ENCODE measurements at regions of chr17 and their contacts with region 1.

Region 1: GRCh38 chr17:60188759-60189158 is 39.0 kb downstream of the CA4 start:
- DNase-seq: no peak
- ATAC-seq: no peak
- H3K4me3 ChIP-seq: no peak overlapping the region
- H3K27ac ChIP-seq: no peak overlapping the region
- H3K4me1 ChIP-seq: no peaks in the 10 kb centered on the region
- H3K27me3 ChIP-seq: no peaks in the 10 kb centered on the region
- CTCF ChIP-seq: no peak
- POLR2A ChIP-seq: no peak

Region 2: GRCh38 chr17:59668816-59669215 is 519.9 kb before region 1 on chr17:
- in situ Hi-C with region 1: loop called in 1 of 4 experiments (anchors 25 kb)
- intact Hi-C with region 1: no loop called
- DNase-seq: no peak
- ATAC-seq: no peak
- H3K4me3 ChIP-seq: no peak overlapping the region
- H3K27ac ChIP-seq: no peak overlapping the region
- H3K4me1 ChIP-seq: peaks cover 7 to 15% of the 10 kb centered on the region in 2 donors
- H3K27me3 ChIP-seq: no peaks in the 10 kb centered on the region
- CTCF ChIP-seq: no peak
- POLR2A ChIP-seq: no peak